ENCODE measurements at regions of chr18 and their contacts with region 1.

Region 1: DNA sequence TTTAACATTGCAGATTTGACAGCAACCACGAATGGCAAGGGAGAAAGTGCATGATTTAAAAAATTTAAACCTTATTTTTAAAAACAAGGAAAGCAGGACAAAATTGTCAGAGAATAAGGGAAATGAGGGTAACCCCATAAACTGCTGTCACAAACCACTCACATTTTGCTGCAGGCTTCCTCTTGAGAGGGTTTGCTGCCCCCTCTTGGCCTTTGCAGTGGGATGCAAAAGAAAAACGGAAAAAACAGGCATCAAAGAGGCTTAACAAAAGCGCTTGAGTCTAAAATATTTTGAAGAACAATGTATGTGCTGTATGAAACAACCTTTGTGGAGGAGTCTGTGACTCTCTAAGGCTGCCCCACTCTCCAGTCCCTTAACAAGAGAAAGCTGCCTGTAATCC is 91.6 kb downstream of the TMX3 start:
- DNase-seq: peak; percentile 76
- H3K4me3 Mint-ChIP-seq: no peak overlapping the region
- H3K27ac Mint-ChIP-seq: no peak overlapping the region
- H3K4me1 Mint-ChIP-seq: no peaks in the 10 kb centered on the region
- H3K27me3 Mint-ChIP-seq: no peaks in the 10 kb centered on the region
- CTCF ChIP-seq: peak; percentile 78

Region 2: DNA sequence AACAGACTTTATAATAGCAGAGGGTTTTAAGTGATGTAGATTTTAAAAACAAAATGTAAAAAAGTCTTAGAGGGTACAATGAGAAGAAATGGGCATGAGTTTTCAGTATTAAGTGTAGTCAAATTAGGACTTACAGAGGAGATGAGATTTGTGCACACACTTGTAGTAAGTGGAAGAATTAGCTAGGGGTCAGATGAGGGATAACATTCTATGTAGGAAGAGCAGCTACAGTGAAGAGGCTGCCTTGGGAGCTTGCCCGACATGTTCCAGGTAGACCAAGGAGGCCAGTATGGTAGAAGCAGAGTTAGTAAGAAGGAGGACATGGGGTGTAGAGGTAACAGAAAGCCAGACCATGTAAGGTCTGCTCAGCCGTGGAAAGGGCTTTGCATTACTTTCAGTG is 917.6 kb before region 1 on chr18:
- CTCF ChIA-PET with region 1: interaction called, 3 read pairs
- POLR2A ChIA-PET with region 1: no interaction called
- intact Hi-C with region 1: loop called (anchors 10 kb)
- DNase-seq: peak; percentile 7
- H3K4me3 Mint-ChIP-seq: no peak overlapping the region
- H3K27ac Mint-ChIP-seq: no peak overlapping the region
- H3K4me1 Mint-ChIP-seq: no peaks in the 10 kb centered on the region
- H3K27me3 Mint-ChIP-seq: no peaks in the 10 kb centered on the region
- CTCF ChIP-seq: no peak

Region 3: DNA sequence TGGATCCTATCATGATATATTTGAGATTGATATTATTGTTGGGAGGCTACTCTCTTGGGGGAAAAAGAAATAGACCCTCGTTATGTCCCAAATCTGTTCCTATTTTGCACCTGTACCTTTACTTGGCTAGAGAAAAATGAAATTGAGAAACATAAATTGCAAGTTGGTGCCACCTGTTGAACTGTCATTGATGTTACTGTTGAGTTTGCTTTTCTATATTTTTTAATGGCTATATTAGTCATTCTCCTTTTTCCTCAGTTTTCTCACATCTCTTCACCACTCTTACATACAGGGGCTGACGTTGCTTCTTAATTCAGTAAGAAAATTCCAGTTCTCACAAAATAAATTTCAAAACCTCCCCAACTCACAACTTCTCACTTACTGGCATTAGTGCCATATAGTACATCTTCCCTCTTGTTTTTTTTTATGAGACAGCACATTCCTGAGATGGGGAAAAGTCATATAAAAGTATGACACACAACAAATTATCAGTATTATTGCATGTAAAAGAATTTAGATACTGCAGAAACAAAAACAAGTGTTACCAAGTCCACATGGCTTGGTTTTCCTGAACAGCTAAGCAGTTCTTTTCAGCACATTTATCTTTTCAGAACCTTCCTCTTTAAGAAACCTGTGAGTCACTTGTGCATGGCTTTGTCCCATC is 758.5 kb before region 1 on chr18:
- CTCF ChIA-PET with region 1: interaction called, 5 read pairs
- POLR2A ChIA-PET with region 1: no interaction called
- intact Hi-C with region 1: loop called (anchors 2 kb)
- DNase-seq: peak; percentile 17
- H3K4me3 Mint-ChIP-seq: no peak overlapping the region
- H3K27ac Mint-ChIP-seq: no peak overlapping the region
- H3K4me1 Mint-ChIP-seq: peaks cover 12% of the 10 kb centered on the region
- H3K27me3 Mint-ChIP-seq: no peaks in the 10 kb centered on the region
- CTCF ChIP-seq: no peak

Region 4: DNA sequence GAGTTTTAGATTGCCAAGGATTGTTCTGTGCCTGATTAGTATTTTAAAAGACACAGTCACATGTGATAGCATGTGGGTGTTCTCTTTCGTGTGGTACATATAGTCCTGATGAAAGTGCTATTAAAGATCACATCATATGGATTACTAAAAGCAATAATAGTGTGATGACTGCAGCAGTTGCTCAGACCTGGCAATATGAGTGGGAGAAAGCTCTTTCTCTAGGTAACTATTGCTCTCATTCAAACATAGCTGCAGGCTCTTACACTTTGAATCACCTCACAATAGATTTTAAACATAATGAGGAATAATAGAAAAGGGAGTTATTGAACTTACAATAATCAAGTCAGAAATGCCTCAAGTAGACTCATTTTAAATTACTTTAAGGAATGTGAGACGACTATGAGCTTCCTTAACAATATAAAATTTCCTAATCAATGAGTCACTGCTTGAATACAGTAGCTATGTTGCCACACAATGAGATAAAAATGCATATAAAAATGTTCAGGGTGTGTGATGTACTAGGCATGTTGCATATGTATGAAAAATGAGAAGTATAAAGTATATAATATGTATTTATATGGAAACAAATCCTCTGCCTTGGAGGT is 360.6 kb before region 1 on chr18:
- CTCF ChIA-PET with region 1: no interaction called
- POLR2A ChIA-PET with region 1: no interaction called
- intact Hi-C with region 1: loop called (anchors 5 kb)
- DNase-seq: peak; percentile 65
- H3K4me3 Mint-ChIP-seq: peak overlapping the region; percentile 43
- H3K27ac Mint-ChIP-seq: peak overlapping the region; percentile 87
- H3K4me1 Mint-ChIP-seq: peaks cover 17% of the 10 kb centered on the region
- H3K27me3 Mint-ChIP-seq: no peaks in the 10 kb centered on the region
- CTCF ChIP-seq: no peak

Region 5: DNA sequence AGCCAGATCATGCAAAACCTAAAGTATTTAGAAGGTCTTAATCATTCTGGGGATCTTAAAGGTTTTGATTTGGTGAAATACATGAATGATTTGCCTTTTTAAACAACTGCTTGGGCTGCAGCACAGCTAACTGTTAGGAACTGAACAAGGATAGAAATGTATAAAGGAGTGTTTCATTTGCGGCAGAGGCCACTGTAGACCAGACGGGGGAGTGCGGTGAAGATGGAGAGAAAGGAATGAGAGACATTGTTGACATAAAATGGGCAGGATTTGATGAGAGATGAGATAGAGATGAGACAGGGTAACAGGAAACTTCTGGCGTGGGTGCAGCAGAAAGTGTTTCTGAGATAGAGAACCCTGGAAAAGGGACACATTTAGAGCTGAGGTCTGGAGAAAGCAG is 216.6 kb before region 1 on chr18:
- CTCF ChIA-PET with region 1: no interaction called
- POLR2A ChIA-PET with region 1: no interaction called
- intact Hi-C with region 1: loop called (anchors 5 kb)
- DNase-seq: no peak
- H3K4me3 Mint-ChIP-seq: no peak overlapping the region
- H3K27ac Mint-ChIP-seq: no peak overlapping the region
- H3K4me1 Mint-ChIP-seq: peaks cover 6% of the 10 kb centered on the region
- H3K27me3 Mint-ChIP-seq: no peaks in the 10 kb centered on the region
- CTCF ChIP-seq: no peak

Region 6: GRCh38 chr18:68840554-68841263 is 217.4 kb after region 1 on chr18:
- CTCF ChIA-PET with region 1: no interaction called
- POLR2A ChIA-PET with region 1: no interaction called
- intact Hi-C with region 1: no loop called
- DNase-seq: peak; percentile 95
- H3K4me3 Mint-ChIP-seq: peak overlapping the region; percentile 15
- H3K27ac Mint-ChIP-seq: peak overlapping the region; percentile 33
- H3K4me1 Mint-ChIP-seq: peaks cover 27% of the 10 kb centered on the region
- H3K27me3 Mint-ChIP-seq: no peaks in the 10 kb centered on the region
- CTCF ChIP-seq: no peak